ENCODE measurements at regions of chr1 and their contacts with region 1.

Region 1: DNA sequence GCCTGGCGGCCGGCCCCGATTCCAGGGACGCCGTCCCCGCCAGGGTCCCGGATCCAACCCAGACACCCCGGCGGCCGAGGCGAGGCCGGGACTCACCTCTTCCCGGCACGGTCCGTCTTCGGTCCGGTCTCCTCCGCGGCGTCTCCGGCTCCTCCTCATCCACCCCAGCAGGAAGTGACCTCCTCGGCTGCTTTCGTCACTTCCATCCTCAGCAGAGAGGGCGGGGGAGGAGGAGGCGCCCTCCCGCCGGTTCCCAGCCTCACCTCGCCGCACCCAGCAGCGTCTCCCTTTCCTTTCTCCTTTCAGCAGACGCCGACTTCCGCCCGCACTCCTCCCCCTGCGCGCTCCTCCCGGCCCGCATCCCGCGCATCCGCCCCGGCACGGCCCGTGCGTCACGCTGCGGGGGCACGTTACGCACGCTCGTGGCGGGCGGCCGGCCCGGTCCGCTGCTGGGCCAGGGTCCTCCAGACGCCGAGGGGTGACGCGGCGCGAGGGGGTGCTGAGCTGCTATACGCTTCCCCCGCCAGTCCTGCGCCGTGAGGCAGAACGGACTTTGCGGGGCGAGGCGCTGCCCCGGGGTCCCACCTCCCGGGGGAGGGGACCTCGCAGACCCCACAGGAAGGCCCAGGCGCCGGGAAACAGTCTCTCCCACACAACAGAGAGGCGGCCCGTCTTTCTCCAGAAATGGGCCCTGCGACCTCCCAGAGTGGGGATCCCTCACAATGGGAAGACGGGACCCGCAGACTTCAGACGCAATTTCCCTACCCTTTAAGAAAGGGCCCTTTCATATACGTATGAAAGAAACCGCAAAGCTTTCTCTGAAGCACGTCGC is at the start of gene ETV3:
- DNase-seq: peak; percentile 94
- ATAC-seq: peak; percentile 72
- H3K4me3 Mint-ChIP-seq: peak within 1 kb of the TSS; percentile 97
- H3K27ac Mint-ChIP-seq: peak within 1 kb of the TSS; percentile 95
- H3K4me1 Mint-ChIP-seq: peaks cover 75% of the 10 kb centered on the region
- H3K27me3 Mint-ChIP-seq: no peaks in the 10 kb centered on the region
- total RNA-seq, gene ETV3: 32.0 to 36.7 TPM

Region 2: DNA sequence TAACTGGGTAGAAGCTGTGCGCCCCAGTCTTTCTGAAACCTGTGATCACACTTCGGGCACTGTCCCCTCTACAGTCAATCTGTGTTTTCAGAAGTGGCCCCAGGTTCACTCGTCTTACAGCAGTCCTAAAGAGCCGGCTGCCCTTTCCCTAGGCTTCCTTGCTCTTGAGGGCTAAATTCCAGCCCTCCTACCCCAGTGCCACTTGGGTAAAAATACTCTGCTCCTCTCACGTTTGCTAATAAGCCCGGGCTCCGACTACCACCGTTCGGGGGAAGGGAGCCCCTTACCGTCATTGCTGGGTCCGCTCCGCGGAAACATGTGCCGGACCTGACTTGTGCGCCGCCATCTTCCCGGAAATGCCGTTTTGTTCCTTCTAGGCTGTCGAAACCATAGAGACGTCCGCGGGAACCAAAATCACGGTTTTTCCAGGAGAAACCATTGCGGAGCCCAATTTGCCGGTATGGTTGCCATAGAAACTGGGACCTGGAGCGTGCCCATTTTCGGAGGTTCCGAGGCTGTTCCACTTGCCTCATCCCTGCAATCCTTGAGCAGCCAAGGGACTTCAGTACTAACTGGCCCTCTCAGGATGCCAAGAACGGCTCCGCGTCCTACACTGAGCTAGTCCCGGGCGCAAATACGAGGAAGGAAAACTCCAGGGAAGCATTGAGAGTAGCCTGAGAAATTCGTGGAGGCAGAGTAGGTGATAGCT is 537.2 kb before region 1 on chr1 and contains the start of gene GPATCH4:
- CTCF ChIA-PET with region 1: no interaction called
- POLR2A ChIA-PET with region 1: no interaction called
- intact Hi-C with region 1: loop called in 1 of 2 experiments (anchors 10 kb)
- DNase-seq: peak; percentile 89
- ATAC-seq: peak; percentile 76
- H3K4me3 Mint-ChIP-seq: peak within 1 kb of the TSS; percentile 97
- H3K27ac Mint-ChIP-seq: peak within 1 kb of the TSS; percentile 99
- H3K4me1 Mint-ChIP-seq: peaks cover 45% of the 10 kb centered on the region
- H3K27me3 Mint-ChIP-seq: no peaks in the 10 kb centered on the region
- total RNA-seq, gene GPATCH4: 38.5 to 48.7 TPM

Region 3: GRCh38 chr1:156740679-156741612 is 397.5 kb before region 1 on chr1 and contains the start of gene MRPL24:
- CTCF ChIA-PET with region 1: no interaction called
- POLR2A ChIA-PET with region 1: no interaction called
- intact Hi-C with region 1: loop called in 1 of 2 experiments (anchors 5 kb)
- DNase-seq: peak; percentile 98
- ATAC-seq: peak; percentile 86
- H3K4me3 Mint-ChIP-seq: peak within 1 kb of the TSS; percentile 98
- H3K27ac Mint-ChIP-seq: peak within 1 kb of the TSS; percentile 94
- H3K4me1 Mint-ChIP-seq: peaks cover 49% of the 10 kb centered on the region
- H3K27me3 Mint-ChIP-seq: no peaks in the 10 kb centered on the region
- total RNA-seq, gene MRPL24: 81.9 to 89.7 TPM

Region 4: DNA sequence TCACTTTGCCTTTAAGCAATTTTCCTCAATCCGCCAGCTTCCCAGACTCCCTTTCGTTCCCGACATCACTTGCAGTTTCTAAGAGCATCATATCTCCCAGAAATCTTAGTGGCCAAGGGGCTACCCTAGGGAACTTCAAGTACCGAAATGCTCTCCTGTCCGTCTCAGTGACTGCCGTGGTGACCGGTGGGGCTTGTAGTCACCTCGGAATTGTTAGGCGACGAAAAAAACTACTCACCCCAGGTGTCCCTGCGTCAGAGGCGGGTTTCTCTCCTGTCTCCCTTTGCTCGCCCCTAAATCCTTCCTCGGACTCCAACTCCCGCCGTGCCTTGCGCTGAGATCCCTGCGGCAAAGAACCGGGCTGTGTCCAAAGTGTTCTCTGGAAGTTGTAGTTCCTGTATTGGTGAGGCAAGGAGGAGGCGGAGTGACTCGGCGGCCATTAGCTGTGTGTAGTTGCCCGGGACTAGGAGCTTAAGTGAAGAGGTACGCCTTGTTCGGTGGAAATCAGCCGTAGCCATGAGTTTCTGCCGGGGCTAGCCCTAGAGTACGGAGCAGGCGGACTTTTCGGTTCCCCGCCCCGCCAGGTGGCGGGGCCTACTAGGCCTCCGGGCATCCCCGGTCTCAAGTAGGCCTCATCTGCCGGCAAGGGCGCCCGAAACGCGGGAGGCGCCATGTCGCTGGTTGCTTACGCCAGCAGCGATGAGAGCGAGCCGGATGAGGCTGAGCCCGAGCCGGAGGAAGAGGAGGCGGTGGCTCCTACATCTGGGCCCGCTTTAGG is 371.1 kb before region 1 on chr1 and contains the start of gene PRCC:
- CTCF ChIA-PET with region 1: no interaction called
- POLR2A ChIA-PET with region 1: no interaction called
- intact Hi-C with region 1: loop called in 1 of 2 experiments (anchors 10 kb)
- DNase-seq: peak; percentile 98
- ATAC-seq: peak; percentile 96
- H3K4me3 Mint-ChIP-seq: no peak within 1 kb of the TSS
- H3K27ac Mint-ChIP-seq: no peak within 1 kb of the TSS
- H3K4me1 Mint-ChIP-seq: peaks cover 35% of the 10 kb centered on the region
- H3K27me3 Mint-ChIP-seq: no peaks in the 10 kb centered on the region
- total RNA-seq, gene PRCC: 80.4 to 110 TPM

Region 5: DNA sequence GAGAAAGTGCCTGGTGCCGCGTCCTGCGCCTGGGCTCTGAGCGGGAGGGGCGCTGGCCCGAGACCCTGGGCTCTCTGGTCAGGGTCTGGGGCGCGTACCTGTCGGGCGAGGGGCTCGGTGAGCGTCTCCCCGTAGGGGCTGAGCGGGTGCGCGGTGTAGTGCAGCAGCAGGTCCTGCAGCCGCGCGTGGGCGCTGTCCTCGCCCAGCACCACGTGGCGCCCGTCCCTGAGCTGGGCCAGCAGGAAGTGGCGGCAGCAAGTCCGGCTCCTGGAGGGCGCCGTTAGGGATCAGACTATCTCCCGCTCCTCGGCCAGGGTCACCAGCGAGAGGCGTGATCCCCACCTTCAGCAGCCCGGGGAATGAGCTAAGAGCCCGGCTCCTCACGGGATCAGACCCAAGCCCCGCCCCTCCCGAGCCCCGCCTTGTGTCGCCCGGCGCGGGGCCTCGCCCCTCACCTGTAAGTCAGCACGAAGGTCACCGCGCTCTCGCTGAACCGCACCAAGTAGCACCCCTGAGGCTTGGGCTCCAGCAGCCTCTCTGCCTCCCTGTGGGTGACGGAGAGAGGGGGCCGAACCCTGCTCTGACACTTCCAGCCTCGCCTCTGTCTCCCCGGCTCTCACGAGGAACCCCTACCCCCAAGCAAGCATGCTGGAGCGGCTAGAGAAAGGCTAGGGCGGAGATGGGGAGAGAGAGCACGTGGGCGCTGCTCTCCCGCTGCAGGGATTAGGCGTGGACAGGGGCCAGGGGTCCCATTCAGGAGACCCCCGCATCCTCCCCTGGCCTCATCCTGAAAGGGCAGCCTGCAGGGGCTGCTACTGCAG is 324.5 kb before region 1 on chr1:
- CTCF ChIA-PET with region 1: no interaction called
- POLR2A ChIA-PET with region 1: no interaction called
- intact Hi-C with region 1: loop called in 1 of 2 experiments (anchors 1 kb)
- DNase-seq: peak; percentile 86
- ATAC-seq: peak; percentile 38
- H3K4me3 Mint-ChIP-seq: peak overlapping the region; percentile 93
- H3K27ac Mint-ChIP-seq: peak overlapping the region; percentile 100
- H3K4me1 Mint-ChIP-seq: peaks cover 61% of the 10 kb centered on the region
- H3K27me3 Mint-ChIP-seq: no peaks in the 10 kb centered on the region

Region 6: GRCh38 chr1:157150631-157151030 is 12.2 kb after region 1 on chr1:
- CTCF ChIA-PET with region 1: interaction called, 98 read pairs
- POLR2A ChIA-PET with region 1: interaction called, 5 read pairs
- intact Hi-C with region 1: loop called in 1 of 2 experiments (anchors 2 kb)
- DNase-seq: no peak
- ATAC-seq: no peak
- H3K4me3 Mint-ChIP-seq: no peak overlapping the region
- H3K27ac Mint-ChIP-seq: no peak overlapping the region
- H3K4me1 Mint-ChIP-seq: peaks cover 34% of the 10 kb centered on the region
- H3K27me3 Mint-ChIP-seq: no peaks in the 10 kb centered on the region

Region 7: GRCh38 chr1:157156058-157156541 is 17.7 kb after region 1 on chr1:
- CTCF ChIA-PET with region 1: interaction called, 98 read pairs
- POLR2A ChIA-PET with region 1: interaction called, 5 read pairs
- intact Hi-C with region 1: loop called in 1 of 2 experiments (anchors 2 kb)
- DNase-seq: peak; percentile 89
- ATAC-seq: peak; percentile 88
- H3K4me3 Mint-ChIP-seq: no peak overlapping the region
- H3K27ac Mint-ChIP-seq: no peak overlapping the region
- H3K4me1 Mint-ChIP-seq: peaks cover 16% of the 10 kb centered on the region
- H3K27me3 Mint-ChIP-seq: peaks cover 11% of the 10 kb centered on the region

Region 8: GRCh38 chr1:157496121-157496526 is 357.7 kb after region 1 on chr1:
- CTCF ChIA-PET with region 1: no interaction called
- POLR2A ChIA-PET with region 1: no interaction called
- intact Hi-C with region 1: no loop called
- DNase-seq: peak; percentile 55
- ATAC-seq: peak; percentile 63
- H3K4me3 Mint-ChIP-seq: no peak overlapping the region
- H3K27ac Mint-ChIP-seq: no peak overlapping the region
- H3K4me1 Mint-ChIP-seq: no peaks in the 10 kb centered on the region
- H3K27me3 Mint-ChIP-seq: peaks cover 21% of the 10 kb centered on the region

Measured in activated CD4-positive, alpha-beta T cell treated with anti-CD3 and anti-CD28 coated beads for 36 hours (primary cell).